MCF 10A (cell line): ENCODE measurements at regions of chr2 and their contacts with region 1.

Region 1: GRCh38 chr2:212892193-212892592 is 259.2 kb downstream of the IKZF2 start:
- DNase-seq: peak; percentile 58
- H3K4me3 Mint-ChIP-seq: no peak overlapping the region
- H3K27ac Mint-ChIP-seq: no peak overlapping the region
- H3K4me1 Mint-ChIP-seq: peaks cover 6% of the 10 kb centered on the region
- H3K27me3 Mint-ChIP-seq: no peaks in the 10 kb centered on the region
- CTCF ChIP-seq: peak; percentile 37

Region 2: GRCh38 chr2:212109792-212110680 is 782.2 kb before region 1 on chr2:
- CTCF ChIA-PET with region 1: no interaction called
- POLR2A ChIA-PET with region 1: no interaction called
- intact Hi-C with region 1: no loop called
- DNase-seq: no peak
- H3K4me3 Mint-ChIP-seq: no peak overlapping the region
- H3K27ac Mint-ChIP-seq: no peak overlapping the region
- H3K4me1 Mint-ChIP-seq: no peaks in the 10 kb centered on the region
- H3K27me3 Mint-ChIP-seq: peaks cover 74% of the 10 kb centered on the region
- CTCF ChIP-seq: no peak

Region 3: DNA sequence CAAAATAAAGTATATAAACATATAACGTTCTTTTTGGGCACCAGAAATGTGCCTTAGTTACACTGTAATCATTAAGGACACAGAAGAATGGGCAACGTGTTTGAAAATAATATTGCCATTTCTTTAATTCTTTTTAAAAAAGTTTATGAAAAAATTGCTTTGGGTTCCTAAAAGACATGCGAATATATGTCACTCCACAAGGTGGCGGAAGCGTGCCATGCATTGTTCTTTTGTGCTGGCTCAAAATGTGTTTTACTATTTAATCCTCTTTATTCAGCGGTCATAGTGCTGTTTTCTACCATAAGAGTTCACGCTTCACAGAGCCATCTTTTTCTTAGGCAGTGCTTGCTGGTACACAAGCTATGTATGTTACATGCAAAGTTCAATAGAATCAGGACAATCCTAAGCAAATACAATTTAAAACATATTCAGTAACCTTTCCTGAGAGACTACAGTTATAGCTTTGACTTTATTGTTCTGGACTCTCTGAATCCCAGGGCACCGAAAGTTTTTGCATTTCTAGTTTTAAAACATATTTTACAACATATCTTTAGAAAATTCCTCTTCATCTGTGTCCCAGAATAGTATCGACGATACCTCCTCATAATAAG is 205.8 kb before region 1 on chr2:
- CTCF ChIA-PET with region 1: interaction called, 4 read pairs
- POLR2A ChIA-PET with region 1: no interaction called
- intact Hi-C with region 1: loop called (anchors 1 kb)
- DNase-seq: peak; percentile 75
- H3K4me3 Mint-ChIP-seq: no peak overlapping the region
- H3K27ac Mint-ChIP-seq: no peak overlapping the region
- H3K4me1 Mint-ChIP-seq: peaks cover 6% of the 10 kb centered on the region
- H3K27me3 Mint-ChIP-seq: no peaks in the 10 kb centered on the region
- CTCF ChIP-seq: peak; percentile 91

Region 4: DNA sequence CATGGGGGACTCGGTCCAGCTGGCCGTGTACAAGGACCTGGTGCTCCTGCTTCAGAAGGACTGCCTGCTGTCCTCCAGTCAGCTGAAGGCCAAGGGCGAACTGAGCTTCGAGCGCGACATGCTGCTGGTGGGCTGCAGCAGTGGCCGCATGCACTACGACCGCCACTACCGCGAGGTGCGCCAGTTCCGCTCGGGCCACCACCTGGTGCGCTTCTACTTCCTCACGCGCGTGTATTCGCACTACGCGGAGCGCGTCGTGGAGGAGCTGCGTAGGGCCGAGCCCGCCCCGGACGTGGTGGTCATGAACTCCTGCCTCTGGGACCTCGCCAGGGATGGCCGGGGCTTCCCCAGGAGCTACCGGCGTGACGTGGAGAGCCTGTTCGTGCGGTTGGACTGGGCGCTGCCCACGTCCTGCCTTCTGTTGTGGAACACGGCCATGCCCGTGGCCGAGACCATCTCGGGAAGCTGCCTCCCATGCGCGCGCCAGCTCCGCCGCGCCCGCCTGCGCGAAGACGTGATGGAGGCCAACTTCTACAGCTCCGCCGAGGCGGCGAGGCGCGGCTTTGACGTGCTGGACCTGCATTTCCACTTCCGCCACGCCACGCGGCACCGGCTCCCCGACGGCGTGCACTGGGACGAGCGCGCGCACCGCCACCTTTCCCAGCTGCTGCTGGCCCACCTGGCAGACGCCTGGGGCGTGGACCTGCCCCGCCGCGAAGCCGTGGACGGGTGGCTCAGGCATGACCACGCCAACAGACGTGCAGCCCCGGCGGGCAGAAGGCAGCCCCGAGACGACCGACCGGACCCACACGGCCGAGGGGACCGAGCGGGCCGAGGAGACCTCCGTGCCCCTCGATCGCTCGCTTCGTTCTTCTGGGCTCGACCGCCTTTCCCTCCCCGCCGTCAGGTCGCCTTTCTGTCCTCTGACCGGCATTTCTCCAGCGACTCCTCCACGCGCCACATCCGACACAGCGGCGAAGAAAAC is 59.7 kb before region 1 on chr2:
- CTCF ChIA-PET with region 1: no interaction called
- POLR2A ChIA-PET with region 1: no interaction called
- intact Hi-C with region 1: no loop called
- DNase-seq: no peak
- H3K4me3 Mint-ChIP-seq: no peak overlapping the region
- H3K27ac Mint-ChIP-seq: no peak overlapping the region
- H3K4me1 Mint-ChIP-seq: no peaks in the 10 kb centered on the region
- H3K27me3 Mint-ChIP-seq: no peaks in the 10 kb centered on the region
- CTCF ChIP-seq: no peak

Region 5: DNA sequence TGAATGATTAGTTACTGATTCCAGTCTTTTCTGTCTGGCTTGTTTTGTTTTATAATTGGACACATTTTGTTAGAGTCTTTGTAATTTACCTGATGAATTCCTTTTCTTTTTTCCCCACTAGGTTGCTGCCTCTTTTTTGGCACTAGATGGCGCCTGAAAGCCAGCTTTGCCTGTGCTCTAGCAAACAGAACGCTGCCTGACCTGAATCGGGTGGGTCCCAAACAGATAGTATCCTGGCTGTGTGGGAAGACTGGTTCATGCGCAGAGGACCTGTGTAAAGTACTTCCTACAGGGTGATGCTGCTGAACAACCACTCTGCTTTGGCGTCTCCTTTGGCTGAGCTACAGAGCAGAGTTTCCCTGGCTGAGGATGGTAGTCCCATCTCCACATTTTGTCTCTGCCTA is 29.0 kb before region 1 on chr2:
- CTCF ChIA-PET with region 1: interaction called, 11 read pairs
- POLR2A ChIA-PET with region 1: no interaction called
- intact Hi-C with region 1: no loop called
- DNase-seq: peak; percentile 53
- H3K4me3 Mint-ChIP-seq: no peak overlapping the region
- H3K27ac Mint-ChIP-seq: no peak overlapping the region
- H3K4me1 Mint-ChIP-seq: no peaks in the 10 kb centered on the region
- H3K27me3 Mint-ChIP-seq: no peaks in the 10 kb centered on the region
- CTCF ChIP-seq: peak; percentile 40

Region 6: GRCh38 chr2:212905640-212906220 is 13.5 kb after region 1 on chr2:
- CTCF ChIA-PET with region 1: interaction called, 17 read pairs
- POLR2A ChIA-PET with region 1: interaction called, 3 read pairs
- intact Hi-C with region 1: no loop called
- DNase-seq: peak; percentile 78
- H3K4me3 Mint-ChIP-seq: peak overlapping the region; percentile 54
- H3K27ac Mint-ChIP-seq: peak overlapping the region; percentile 96
- H3K4me1 Mint-ChIP-seq: peaks cover 32% of the 10 kb centered on the region
- H3K27me3 Mint-ChIP-seq: no peaks in the 10 kb centered on the region
- CTCF ChIP-seq: no peak